Left ventricle myocardium superior (tissue), 1 donor: ENCODE measurements at regions of chr13 and their contacts with region 1.

Region 1: DNA sequence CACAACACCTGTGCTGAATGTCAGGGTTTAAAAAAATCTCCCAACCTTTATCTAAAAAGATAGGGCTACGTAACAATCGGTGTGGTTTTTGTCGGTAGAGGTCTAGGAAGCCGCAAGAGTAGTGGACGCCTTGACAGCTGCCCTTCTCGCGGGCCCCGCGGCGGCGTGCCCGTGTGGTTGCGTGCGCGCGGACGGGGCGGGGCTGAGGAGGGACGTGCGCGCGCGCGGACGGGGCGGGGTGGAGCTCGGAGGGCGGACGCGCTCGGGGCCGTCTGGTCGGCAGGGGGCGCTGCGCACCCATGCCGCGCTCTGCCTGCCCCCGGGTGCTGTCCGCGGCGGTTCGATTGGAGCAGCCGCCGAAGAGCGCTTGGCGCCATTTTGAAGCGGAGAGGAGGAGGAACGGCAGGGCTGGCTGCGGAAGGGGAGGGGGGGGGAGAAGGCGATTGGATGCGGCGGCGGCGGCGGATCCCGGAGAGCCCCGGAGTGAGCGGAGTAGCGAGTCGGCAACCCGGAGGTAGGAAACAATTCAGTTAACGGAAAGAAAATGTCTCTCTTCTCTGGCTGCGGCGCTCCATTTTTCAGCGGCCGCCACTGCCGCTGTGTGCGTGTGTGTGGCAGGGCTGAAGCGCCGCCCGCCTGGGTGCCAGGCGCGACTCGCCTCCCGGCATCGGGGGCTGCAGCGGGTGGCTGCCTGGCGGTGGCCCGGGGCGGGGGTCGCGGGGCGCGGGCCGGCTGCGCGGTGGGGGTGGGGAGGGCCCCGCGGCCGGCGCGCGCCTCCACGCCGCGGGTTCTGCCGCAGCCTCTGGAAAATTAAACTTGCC is at the start of gene PDS5B:
- DNase-seq: peak; percentile 98
- ATAC-seq: peak; percentile 97
- total RNA-seq, gene PDS5B: 26.1 TPM

Region 2: DNA sequence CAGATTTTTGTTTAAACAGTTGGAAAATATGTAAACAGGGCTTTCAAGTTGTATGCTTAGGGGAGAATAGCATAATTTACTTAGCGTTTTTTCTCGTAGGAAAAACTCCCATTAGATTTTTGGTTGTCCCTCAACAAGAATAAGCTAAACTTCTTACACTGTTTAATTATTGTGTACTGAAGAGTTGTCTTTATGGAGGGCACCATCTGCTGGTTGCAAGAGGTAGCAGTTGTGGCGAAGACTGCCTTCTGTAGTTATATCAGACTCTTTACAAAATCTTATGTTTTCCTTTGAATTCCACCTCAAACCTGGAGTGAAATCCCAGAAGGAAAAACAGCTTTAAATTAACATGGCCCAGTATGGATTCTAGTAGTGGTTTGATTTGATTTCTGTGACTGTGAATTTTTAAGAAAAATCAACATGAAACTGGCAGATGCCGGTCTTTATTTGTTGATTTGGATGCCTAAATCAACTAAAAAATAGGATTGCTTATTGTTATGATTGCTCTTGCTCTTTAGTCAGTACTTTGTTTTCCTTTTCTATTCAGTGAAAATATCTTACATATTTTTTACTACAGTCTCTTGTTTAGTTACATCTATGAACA is 53.3 kb after region 1 on chr13:
- intact Hi-C with region 1: loop called (anchors 2 kb)
- DNase-seq: peak; percentile 46
- ATAC-seq: peak; percentile 86

Region 3: GRCh38 chr13:33728271-33729037 is 1142.2 kb after region 1 on chr13:
- intact Hi-C with region 1: loop called (anchors 5 kb)
- DNase-seq: peak; percentile 65
- ATAC-seq: peak; percentile 73